Activated CD4-positive, alpha-beta T cell treated with anti-CD3 and anti-CD28 coated beads for 36 hours (primary cell): ENCODE measurements at regions of chr1 and their contacts with region 1.

Region 1: DNA sequence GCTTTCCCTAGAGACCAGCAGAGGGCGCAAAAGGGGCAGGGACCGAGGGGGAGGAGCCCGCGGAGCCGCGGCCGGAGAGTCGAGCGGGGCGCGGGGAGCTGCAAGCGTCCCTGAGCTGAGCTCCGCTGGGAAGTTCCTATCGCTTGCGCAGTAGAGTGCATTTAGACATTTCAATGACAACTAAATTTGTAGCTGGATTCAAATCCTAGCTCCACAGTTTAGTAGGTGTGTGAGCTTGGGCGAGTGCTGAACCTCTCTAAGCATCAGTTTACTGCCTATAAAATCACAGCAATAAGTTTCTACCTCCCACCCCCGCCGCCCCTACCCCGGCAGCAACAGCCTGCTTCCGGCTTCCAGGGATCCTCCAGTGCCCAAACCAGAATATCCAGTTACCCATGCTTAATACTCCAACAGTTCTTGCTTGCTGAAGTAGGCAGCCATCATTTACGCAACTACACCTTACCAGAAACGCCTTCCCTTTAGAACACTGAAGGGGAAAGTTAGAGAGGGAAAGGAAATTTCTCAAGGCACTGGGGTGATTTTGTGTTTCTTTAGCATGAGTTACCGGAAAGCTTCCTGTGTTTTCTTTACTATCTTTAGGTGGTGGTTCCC is 9.1 kb downstream of the TLR5 start:
- DNase-seq: peak; percentile 89
- ATAC-seq: peak; percentile 88
- H3K4me3 Mint-ChIP-seq: peak overlapping the region; percentile 33
- H3K27ac Mint-ChIP-seq: no peak overlapping the region
- H3K4me1 Mint-ChIP-seq: peaks cover 15% of the 10 kb centered on the region
- H3K27me3 Mint-ChIP-seq: peaks cover 9% of the 10 kb centered on the region

Region 2: GRCh38 chr1:223123011-223123610 is 10.8 kb before region 1 on chr1:
- CTCF ChIA-PET with region 1: interaction called, 72 read pairs
- POLR2A ChIA-PET with region 1: no interaction called
- intact Hi-C with region 1: no loop called
- DNase-seq: no peak
- ATAC-seq: no peak
- H3K4me3 Mint-ChIP-seq: peak overlapping the region; percentile 43
- H3K27ac Mint-ChIP-seq: no peak overlapping the region
- H3K4me1 Mint-ChIP-seq: peaks cover 6% of the 10 kb centered on the region
- H3K27me3 Mint-ChIP-seq: peaks cover 2% of the 10 kb centered on the region

Region 3: DNA sequence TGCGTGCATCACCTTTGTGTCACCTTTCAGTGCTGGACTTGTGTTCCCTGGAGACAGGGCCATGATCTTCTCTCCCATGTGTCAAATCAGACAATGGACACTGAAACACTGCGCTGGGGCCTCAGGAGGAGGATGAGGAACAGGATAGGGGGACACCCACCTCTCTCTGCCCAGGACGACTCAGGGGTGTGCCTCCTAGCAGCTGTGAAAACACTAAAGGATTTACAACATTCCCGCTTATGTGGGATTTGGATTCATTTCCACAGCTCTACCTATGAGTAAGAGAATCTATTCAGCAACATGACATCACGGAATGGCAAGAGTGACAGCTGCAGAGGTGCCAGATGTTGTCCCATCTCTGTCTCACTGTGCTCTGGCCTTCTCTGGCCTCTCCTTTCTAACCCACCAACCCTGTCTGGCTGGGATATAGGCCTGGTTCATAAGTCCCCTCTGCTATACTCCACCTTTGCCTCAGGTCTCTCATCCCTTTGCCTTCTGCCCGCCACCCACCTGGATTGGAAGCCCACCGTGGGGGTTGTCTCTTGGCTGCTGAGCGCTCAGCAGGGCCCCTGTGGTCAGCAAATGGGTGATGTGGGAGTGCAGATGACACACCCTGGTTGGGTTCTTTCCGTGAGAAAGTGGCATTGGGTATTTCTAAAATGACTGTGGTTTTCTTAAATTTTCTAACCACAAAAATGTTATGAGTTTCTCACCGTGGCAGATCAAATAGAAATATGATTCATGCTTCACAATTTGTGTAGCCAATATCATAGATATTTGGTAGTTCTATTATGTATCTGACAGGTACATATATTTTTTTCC is 56.2 kb after region 1 on chr1:
- CTCF ChIA-PET with region 1: interaction called, 3 read pairs
- POLR2A ChIA-PET with region 1: no interaction called
- intact Hi-C with region 1: loop called in 1 of 2 experiments (anchors 2 kb)
- DNase-seq: peak; percentile 81
- ATAC-seq: peak; percentile 90
- H3K4me3 Mint-ChIP-seq: peak overlapping the region; percentile 8
- H3K27ac Mint-ChIP-seq: peak overlapping the region; percentile 73
- H3K4me1 Mint-ChIP-seq: peaks cover 40% of the 10 kb centered on the region
- H3K27me3 Mint-ChIP-seq: peaks cover 2% of the 10 kb centered on the region

Region 4: DNA sequence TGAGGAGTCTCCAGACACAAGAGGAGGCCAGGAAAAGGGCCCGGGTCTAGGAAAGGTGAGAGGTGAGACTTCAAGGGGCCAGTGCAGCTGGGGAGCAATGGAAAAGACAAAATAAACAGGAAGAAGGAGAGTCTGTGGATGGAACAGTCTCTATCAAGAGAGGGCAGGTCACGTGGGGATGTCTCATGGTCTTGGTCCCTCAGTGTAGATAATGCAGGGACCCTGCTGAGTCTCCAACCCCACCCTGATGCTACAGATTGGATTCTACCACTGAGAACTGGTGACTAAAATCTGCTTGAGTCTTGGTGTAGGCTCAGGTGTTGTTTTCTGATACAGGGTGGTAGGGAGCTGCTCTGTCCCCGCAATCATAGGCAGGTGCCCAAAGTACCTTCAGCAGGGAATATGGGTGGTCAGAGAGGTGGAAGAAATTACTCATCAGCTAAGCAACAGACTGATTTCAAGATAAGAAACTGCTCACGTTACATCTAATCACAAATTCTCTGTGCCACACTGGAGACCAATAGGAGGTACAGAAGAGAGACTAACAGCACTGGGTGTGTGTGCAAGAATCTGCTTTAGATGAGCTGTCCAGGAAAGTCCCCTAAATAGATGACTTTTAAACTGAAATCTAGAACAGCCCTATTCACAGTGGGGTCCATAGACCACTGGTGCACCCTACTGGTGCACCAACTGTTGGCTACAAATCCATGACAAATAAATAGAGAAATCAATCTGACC is 110.6 kb after region 1 on chr1:
- CTCF ChIA-PET with region 1: interaction called, 35 read pairs
- POLR2A ChIA-PET with region 1: no interaction called
- intact Hi-C with region 1: loop called (anchors 1 kb)
- DNase-seq: peak; percentile 56
- ATAC-seq: peak; percentile 96
- H3K4me3 Mint-ChIP-seq: no peak overlapping the region
- H3K27ac Mint-ChIP-seq: no peak overlapping the region
- H3K4me1 Mint-ChIP-seq: peaks cover 46% of the 10 kb centered on the region
- H3K27me3 Mint-ChIP-seq: no peaks in the 10 kb centered on the region

Region 5: DNA sequence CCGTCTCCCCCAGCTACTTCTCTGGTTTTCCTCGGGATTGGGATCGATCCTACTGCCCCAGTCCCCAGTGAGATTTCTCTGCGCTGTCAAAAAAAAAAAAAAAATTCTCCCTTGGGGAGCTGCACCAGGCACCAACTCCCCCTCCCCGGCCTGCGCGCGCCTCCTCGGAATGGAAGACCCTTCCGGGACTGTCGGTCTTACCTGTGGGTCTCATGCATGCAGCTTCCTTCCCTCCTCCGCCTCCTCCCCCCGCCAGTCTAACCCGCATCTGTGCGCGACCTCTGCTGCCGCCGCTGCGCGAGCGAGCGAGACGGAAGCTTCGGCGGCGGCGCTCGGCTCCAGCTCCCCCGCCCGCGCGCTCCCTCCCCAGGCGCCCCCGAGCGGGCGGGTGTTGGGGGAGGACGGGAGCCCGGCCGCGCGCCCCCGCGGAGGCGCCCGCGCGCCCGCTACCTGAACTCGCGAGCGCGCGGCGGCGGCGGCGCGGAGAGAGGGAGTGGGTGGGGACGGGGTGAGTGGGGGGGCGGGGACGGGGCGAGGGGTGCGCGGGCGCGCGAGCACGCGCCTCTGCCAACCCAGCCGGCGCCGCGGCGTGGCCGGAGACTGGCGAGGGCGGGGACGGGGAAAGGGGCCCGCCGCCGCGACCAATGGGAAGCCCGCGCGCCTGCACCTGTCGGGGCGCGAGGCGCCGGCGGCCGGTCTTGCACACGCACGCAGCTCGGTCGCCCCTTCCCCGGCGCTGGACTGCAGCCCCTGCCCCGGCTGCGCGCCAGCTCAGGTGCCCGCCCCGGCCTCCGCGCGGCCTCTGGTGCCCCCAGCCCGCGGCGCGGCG is 230.1 kb after region 1 on chr1 and contains the start of gene SUSD4:
- CTCF ChIA-PET with region 1: interaction called, 10 read pairs
- POLR2A ChIA-PET with region 1: interaction called, 3 read pairs
- intact Hi-C with region 1: loop called (anchors 1 to 5 kb)
- DNase-seq: peak; percentile 82
- ATAC-seq: peak; percentile 90
- H3K4me3 Mint-ChIP-seq: peak within 1 kb of the TSS; percentile 80
- H3K27ac Mint-ChIP-seq: peak within 1 kb of the TSS; percentile 37
- H3K4me1 Mint-ChIP-seq: peaks cover 18% of the 10 kb centered on the region
- H3K27me3 Mint-ChIP-seq: peaks cover 11% of the 10 kb centered on the region
- total RNA-seq, gene SUSD4: 1.9 to 2.2 TPM